ENCODE measurements at regions of chr10 and their contacts with region 1.

Region 1: GRCh38 chr10:80599424-80599847 is 61.7 kb downstream of the SH2D4B start:
- DNase-seq: peak in 5 of 9 experiments; percentile 20 to 58 (median 45)
- ATAC-seq: peak; percentile 67
- H3K4me3 ChIP-seq: no peak overlapping the region
- H3K4me3 Mint-ChIP-seq: no peak overlapping the region
- H3K27ac ChIP-seq: no peak overlapping the region
- H3K27ac Mint-ChIP-seq: no peak overlapping the region
- H3K4me1 ChIP-seq: no peaks in the 10 kb centered on the region
- H3K4me1 Mint-ChIP-seq: no peaks in the 10 kb centered on the region
- H3K27me3 ChIP-seq: no peaks in the 10 kb centered on the region
- H3K27me3 Mint-ChIP-seq: no peaks in the 10 kb centered on the region
- CTCF ChIP-seq: peak; percentile 48

Region 2: DNA sequence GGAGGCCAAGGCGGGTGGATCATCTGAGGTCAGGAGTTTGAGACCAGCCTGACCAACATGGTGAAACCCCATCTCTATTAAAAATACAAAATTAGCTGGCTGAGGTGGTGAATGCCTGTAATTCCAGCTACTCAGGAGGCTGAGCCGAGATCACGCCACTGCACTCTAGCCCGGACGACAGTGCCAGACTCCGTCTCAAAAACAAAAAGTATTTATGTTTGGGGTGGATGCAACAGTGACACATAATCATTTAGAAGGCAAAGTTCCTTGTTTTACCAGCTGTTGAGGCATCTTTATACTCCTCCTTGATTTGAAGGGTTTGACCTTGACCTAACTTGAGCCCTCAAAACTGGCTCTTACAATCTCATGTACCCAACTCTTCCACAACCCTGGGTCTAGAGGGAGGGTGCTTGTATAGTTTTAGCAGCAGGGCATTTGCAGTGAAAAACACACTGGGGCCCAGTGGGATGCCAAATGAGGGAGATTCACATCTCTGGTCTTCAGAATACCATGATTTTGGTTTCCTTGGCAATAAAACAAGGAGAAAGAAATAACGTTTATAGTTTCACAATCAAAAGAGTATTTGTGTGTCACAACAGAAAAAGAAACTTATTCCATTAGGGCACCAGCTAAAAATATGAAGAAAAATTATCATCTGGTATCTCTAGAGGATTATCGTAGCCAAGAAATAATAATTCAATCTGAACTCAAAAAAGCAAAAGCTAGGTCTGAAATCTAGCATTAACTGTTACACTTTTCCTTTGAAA is 535.1 kb before region 1 on chr10:
- CTCF ChIA-PET with region 1: no interaction called
- POLR2A ChIA-PET with region 1: no interaction called
- intact Hi-C with region 1: no loop called
- DNase-seq: no peak
- ATAC-seq: no peak
- H3K4me3 ChIP-seq: no peak overlapping the region
- H3K4me3 Mint-ChIP-seq: no peak overlapping the region
- H3K27ac ChIP-seq: no peak overlapping the region
- H3K27ac Mint-ChIP-seq: no peak overlapping the region
- H3K4me1 ChIP-seq: no peaks in the 10 kb centered on the region
- H3K4me1 Mint-ChIP-seq: no peaks in the 10 kb centered on the region
- H3K27me3 ChIP-seq: no peaks in the 10 kb centered on the region
- H3K27me3 Mint-ChIP-seq: no peaks in the 10 kb centered on the region
- CTCF ChIP-seq: no peak

Region 3: DNA sequence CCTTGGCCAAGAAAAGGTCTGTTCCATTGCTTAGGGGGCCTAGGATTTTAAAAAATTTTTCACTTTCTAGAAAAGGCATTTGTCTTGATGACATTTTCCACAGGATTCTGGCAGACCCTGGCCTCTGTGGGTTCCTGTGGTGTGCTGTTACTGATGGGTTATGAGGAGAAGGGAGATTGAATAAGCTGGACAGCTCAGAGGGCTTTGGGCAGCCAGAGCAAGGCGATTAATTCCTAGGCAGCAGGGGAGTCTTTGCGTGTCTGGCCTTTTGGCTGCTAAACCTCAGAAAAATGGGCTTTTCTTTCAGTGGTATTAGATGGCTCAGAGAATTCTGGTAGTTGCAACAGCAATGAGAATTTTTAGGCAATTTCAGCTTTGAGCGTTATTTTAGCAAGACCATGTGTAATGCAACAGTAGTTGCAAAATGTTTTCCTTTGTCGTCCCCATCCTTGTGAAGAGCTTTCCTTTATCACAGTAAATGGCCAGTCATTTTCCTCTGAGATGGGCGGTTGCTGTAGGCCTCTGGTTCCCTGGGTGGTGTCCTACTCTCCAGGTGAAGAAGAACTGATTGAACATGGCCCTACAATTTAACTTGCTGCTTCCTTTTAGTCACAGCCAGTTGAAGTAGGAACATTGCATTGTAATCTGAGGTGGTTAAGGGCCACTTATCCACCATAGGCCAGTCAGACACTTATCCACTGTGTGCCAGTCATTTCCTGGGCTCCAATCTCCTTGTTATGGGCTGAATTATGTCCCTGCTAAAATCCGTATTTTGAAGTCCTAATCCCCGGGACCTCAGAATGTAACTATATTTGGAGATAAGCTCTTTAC is 18.6 kb before region 1 on chr10:
- CTCF ChIA-PET with region 1: interaction called, 22 read pairs
- POLR2A ChIA-PET with region 1: no interaction called
- intact Hi-C with region 1: no loop called
- DNase-seq: no peak
- ATAC-seq: no peak
- H3K4me3 ChIP-seq: no peak overlapping the region
- H3K4me3 Mint-ChIP-seq: no peak overlapping the region
- H3K27ac ChIP-seq: no peak overlapping the region
- H3K27ac Mint-ChIP-seq: no peak overlapping the region
- H3K4me1 ChIP-seq: no peaks in the 10 kb centered on the region
- H3K4me1 Mint-ChIP-seq: no peaks in the 10 kb centered on the region
- H3K27me3 ChIP-seq: no peaks in the 10 kb centered on the region
- H3K27me3 Mint-ChIP-seq: peaks cover 9% of the 10 kb centered on the region
- CTCF ChIP-seq: no peak

Region 4: DNA sequence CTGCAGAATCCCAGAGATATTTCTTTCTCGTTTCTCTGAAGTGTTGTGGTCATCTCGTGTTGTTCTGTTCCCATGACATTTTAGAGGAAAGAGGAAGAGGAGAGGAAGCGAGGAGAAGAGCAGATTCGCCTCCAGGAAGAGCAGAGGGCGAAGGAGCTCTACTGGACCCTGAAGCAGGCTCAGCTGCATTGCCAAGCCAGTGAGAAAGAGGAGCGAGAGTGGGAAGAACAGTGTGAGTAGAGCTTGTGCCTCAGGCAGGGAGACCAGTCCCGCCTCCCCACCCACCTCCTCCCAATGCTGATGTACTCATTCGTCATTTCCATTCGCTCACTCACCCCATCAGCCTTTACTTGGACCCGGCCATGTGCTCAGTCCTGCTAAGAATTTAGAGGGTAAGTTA is 10.9 kb before region 1 on chr10:
- CTCF ChIA-PET with region 1: interaction called, 22 read pairs
- POLR2A ChIA-PET with region 1: no interaction called
- intact Hi-C with region 1: no loop called
- DNase-seq: no peak
- ATAC-seq: no peak
- H3K4me3 ChIP-seq: no peak overlapping the region
- H3K4me3 Mint-ChIP-seq: no peak overlapping the region
- H3K27ac ChIP-seq: no peak overlapping the region
- H3K27ac Mint-ChIP-seq: no peak overlapping the region
- H3K4me1 ChIP-seq: no peaks in the 10 kb centered on the region
- H3K4me1 Mint-ChIP-seq: no peaks in the 10 kb centered on the region
- H3K27me3 ChIP-seq: peaks cover 0 to 2% of the 10 kb centered on the region in 2 experiments
- H3K27me3 Mint-ChIP-seq: peaks cover 2% of the 10 kb centered on the region
- CTCF ChIP-seq: no peak

Measured in CD8-positive, alpha-beta T cell (primary cell).